ENCODE measurements at regions of chr4 and their contacts with region 1.

Region 1: GRCh38 chr4:99949034-99949998 is 759 bp downstream of the H2AZ1 start:
- DNase-seq: peak; percentile 93
- ATAC-seq: peak; percentile 54 to 63
- H3K4me3 ChIP-seq: peak overlapping the region; percentile 80
- H3K27ac ChIP-seq: peak overlapping the region; percentile 81
- H3K4me1 ChIP-seq: peaks cover 39% of the 10 kb centered on the region
- H3K27me3 ChIP-seq: no peaks in the 10 kb centered on the region
- CTCF ChIP-seq: peak; percentile 86

Region 2: GRCh38 chr4:99563310-99564186 is 385.8 kb before region 1 on chr4 and contains the start of gene TRMT10A:
- intact Hi-C with region 1: loop called (anchors 10 kb)
- DNase-seq: peak; percentile 99
- ATAC-seq: peak; percentile 97 to 98
- H3K4me3 ChIP-seq: peak within 1 kb of the TSS; percentile 63
- H3K27ac ChIP-seq: peak within 1 kb of the TSS; percentile 96
- H3K4me1 ChIP-seq: no peaks in the 10 kb centered on the region
- H3K27me3 ChIP-seq: no peaks in the 10 kb centered on the region
- CTCF ChIP-seq: peak; percentile 30
- total RNA-seq, gene TRMT10A: 3.7 TPM

Region 3: DNA sequence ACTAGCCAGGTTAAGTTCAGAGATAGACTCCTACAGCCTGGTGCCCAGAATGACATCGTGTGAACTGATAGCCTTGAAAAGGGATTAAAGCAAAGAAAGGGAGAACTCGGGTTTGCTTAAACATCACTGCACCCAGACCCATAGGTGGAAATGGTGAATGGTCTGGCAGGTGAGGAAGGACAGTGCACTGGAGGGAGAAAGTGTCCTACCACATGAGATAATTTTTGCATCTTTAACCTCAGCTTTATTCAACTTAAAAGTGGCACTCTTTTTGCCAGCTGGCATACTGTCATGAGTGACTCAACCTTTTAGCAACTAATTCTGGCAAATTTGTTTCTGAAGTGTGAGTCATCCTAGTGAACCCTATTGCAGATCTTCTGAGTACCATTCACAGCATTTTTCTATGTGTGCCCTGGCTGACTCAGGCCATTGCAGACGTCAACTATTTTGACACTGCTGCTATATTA is 185.6 kb before region 1 on chr4:
- intact Hi-C with region 1: no loop called
- DNase-seq: no peak
- ATAC-seq: peak; percentile 68
- H3K4me3 ChIP-seq: no peak overlapping the region
- H3K27ac ChIP-seq: no peak overlapping the region
- H3K4me1 ChIP-seq: no peaks in the 10 kb centered on the region
- H3K27me3 ChIP-seq: no peaks in the 10 kb centered on the region
- CTCF ChIP-seq: no peak

Region 4: DNA sequence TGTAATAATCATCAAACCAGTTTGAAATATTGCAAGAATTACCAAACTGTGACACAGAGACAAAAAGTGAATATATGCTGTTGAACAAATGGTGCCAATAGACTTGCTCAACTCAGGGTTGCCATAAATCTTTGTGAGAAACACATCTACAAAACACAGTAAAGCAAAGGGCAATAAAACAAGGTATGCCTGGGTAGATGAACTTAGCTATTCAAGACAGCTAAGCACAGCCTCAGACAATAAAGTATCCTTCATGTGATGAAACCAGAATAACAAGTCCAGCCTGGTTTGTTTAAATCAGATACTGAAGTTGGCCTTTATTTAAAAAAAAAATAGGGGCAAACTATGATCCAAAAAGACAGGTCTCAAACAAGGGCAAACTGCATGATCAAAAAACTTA is 74.2 kb before region 1 on chr4:
- intact Hi-C with region 1: no loop called
- DNase-seq: no peak
- ATAC-seq: no peak
- H3K4me3 ChIP-seq: no peak overlapping the region
- H3K27ac ChIP-seq: no peak overlapping the region
- H3K4me1 ChIP-seq: no peaks in the 10 kb centered on the region
- H3K27me3 ChIP-seq: no peaks in the 10 kb centered on the region
- CTCF ChIP-seq: no peak

Region 5: GRCh38 chr4:99894161-99894997 is 54.9 kb before region 1 on chr4 and contains the start of gene LAMTOR3:
- intact Hi-C with region 1: loop called (anchors 10 kb)
- DNase-seq: peak; percentile 95
- ATAC-seq: peak; percentile 99 to 100
- H3K4me3 ChIP-seq: peak within 1 kb of the TSS; percentile 84
- H3K27ac ChIP-seq: peak within 1 kb of the TSS; percentile 86
- H3K4me1 ChIP-seq: peaks cover 34% of the 10 kb centered on the region
- H3K27me3 ChIP-seq: no peaks in the 10 kb centered on the region
- CTCF ChIP-seq: no peak
- total RNA-seq, gene LAMTOR3: 47.7 TPM

Region 6: DNA sequence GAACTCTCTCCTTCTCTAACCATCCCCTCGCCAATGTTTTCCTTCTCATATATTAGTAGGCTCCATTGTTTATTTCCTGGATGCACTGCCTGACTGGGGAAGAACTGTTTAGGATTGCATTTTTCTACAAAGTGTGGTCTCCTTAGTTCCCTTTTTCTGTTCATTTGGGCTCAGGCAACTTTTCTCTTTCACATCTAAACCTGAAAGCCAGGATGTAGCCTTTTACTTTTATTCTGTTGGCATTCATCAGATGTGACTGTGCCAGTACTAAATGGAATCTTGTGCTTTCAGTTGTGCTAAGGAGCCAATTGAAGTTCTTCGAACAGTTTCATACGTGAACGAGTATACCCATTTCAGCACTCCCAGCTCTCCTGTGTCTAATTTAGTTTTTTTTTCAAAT is 181.2 kb after region 1 on chr4:
- intact Hi-C with region 1: no loop called
- DNase-seq: no peak
- ATAC-seq: no peak
- H3K4me3 ChIP-seq: no peak overlapping the region
- H3K27ac ChIP-seq: no peak overlapping the region
- H3K4me1 ChIP-seq: no peaks in the 10 kb centered on the region
- H3K27me3 ChIP-seq: no peaks in the 10 kb centered on the region
- CTCF ChIP-seq: no peak